Gastrocnemius medialis (tissue), 4 donors: ENCODE measurements at regions of chr1 and their contacts with region 1.

Region 1: GRCh38 chr1:45793942-45794586 is 9.3 kb upstream of the MAST2 start:
- DNase-seq: peak in 1 of 2 donors; percentile 31
- ATAC-seq: peak; percentile 60 to 64
- H3K4me3 ChIP-seq: peak overlapping the region in 3 of 4 donors; percentile 16 to 50 (median 17)
- H3K27ac ChIP-seq: peak overlapping the region; percentile 52 to 81 (median 65)
- H3K4me1 ChIP-seq: peaks cover 8 to 25% of the 10 kb centered on the region in 2 donors
- H3K27me3 ChIP-seq: no peaks in the 10 kb centered on the region
- CTCF ChIP-seq: peak in 1 of 5 experiments; percentile 16
- POLR2A ChIP-seq: no peak

Region 2: GRCh38 chr1:45750298-45751038 is 43.6 kb before region 1 on chr1 and contains the start of gene IPP:
- in situ Hi-C with region 1: no loop called
- intact Hi-C with region 1: loop called (anchors 2 kb)
- DNase-seq: peak; percentile 95 to 97
- ATAC-seq: peak; percentile 91 to 93
- H3K4me3 ChIP-seq: peak within 1 kb of the TSS; percentile 65 to 92 (median 72)
- H3K27ac ChIP-seq: peak within 1 kb of the TSS; percentile 93 to 100 (median 94)
- H3K4me1 ChIP-seq: peaks cover 11% of the 10 kb centered on the region in 2 donors
- H3K27me3 ChIP-seq: no peaks in the 10 kb centered on the region
- CTCF ChIP-seq: peak in 2 of 5 experiments; percentile 17 to 29
- POLR2A ChIP-seq: peak; percentile 93 to 95
- total RNA-seq, gene IPP: 5.6 to 11.7 (median 7.1) TPM

Region 3: DNA sequence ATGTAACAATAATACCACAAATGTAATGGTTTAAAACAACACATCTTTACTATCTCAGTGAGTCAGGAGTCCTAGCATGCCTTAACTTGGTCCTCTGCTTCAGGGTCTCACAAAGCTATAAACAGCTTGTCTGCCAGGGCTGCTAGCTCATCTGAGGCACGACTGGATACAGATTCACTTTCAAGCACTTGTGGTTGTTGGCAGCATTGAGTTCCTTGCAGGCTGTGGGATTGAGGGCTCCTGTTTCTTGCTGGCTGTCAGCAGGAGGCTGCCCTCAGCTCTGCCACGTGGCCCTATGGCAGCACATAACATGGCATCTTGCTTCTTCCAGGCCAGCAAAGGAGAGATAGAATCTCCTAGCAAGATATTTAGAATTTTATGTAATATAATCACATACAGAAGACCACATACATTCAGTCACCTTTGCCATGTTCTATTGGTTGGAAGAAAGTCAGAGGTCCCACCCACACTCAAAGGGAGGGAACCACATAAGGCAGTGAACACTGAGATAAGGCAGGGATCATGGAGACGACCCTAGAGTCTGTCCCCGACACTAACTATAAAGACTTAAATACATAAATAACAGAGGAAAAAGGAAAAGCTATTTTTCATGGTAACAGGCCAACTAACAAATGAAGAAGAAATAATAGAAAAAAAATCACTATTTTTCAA is 24.7 kb before region 1 on chr1:
- in situ Hi-C with region 1: no loop called
- intact Hi-C with region 1: loop called (anchors 2 kb)
- DNase-seq: peak; percentile 85 to 86
- ATAC-seq: peak; percentile 91 to 96
- H3K4me3 ChIP-seq: no peak overlapping the region
- H3K27ac ChIP-seq: peak overlapping the region; percentile 74 to 81 (median 76)
- H3K4me1 ChIP-seq: peaks cover 5 to 23% of the 10 kb centered on the region in 2 donors
- H3K27me3 ChIP-seq: no peaks in the 10 kb centered on the region
- CTCF ChIP-seq: no peak
- POLR2A ChIP-seq: no peak